ENCODE measurements at regions of chr21 and their contacts with region 1.

Region 1: GRCh38 chr21:42193721-42194120 is 25.2 kb upstream of the ABCG1 start:
- DNase-seq: peak in 1 of 2 experiments; percentile 45
- H3K4me3 ChIP-seq: no peak overlapping the region
- H3K27ac ChIP-seq: 0 out of 2 replicates have a peak overlapping the region, but pooled peaks have one; percentile 43
- H3K4me1 ChIP-seq: peaks cover 40% of the 10 kb centered on the region
- H3K27me3 ChIP-seq: no peaks in the 10 kb centered on the region
- CTCF ChIP-seq: no peak

Region 2: GRCh38 chr21:42135386-42136052 is 58.2 kb before region 1 on chr21:
- CTCF ChIA-PET with region 1: interaction called, 13 read pairs
- POLR2A ChIA-PET with region 1: no interaction called
- intact Hi-C with region 1: no loop called
- DNase-seq: no peak
- H3K4me3 ChIP-seq: no peak overlapping the region
- H3K27ac ChIP-seq: no peak overlapping the region
- H3K4me1 ChIP-seq: no peaks in the 10 kb centered on the region
- H3K27me3 ChIP-seq: no peaks in the 10 kb centered on the region
- CTCF ChIP-seq: no peak

Measured in PC-9 (cell line).